ENCODE measurements at regions of chr13 and their contacts with region 1.

Region 1: GRCh38 chr13:23466144-23467002 is 32.9 kb upstream of the SACS start:
- DNase-seq: peak; percentile 38 to 69 (median 65)
- ATAC-seq: peak; percentile 94
- H3K4me3 ChIP-seq: peak overlapping the region; percentile 65
- H3K4me3 Mint-ChIP-seq: peak overlapping the region; percentile 79 to 89 (median 84)
- H3K27ac ChIP-seq: no peak overlapping the region
- H3K27ac Mint-ChIP-seq: peak overlapping the region in 4 of 9 donors; percentile 45 to 69 (median 61)
- H3K4me1 ChIP-seq: peaks cover 0 to 4% of the 10 kb centered on the region in 2 donors
- H3K4me1 Mint-ChIP-seq: peaks cover 0 to 8% (median 4%) of the 10 kb centered on the region in 7 donors
- H3K27me3 ChIP-seq: no peaks in the 10 kb centered on the region
- H3K27me3 Mint-ChIP-seq: peaks cover 0 to 46% (median 6%) of the 10 kb centered on the region in 5 donors

Region 2: DNA sequence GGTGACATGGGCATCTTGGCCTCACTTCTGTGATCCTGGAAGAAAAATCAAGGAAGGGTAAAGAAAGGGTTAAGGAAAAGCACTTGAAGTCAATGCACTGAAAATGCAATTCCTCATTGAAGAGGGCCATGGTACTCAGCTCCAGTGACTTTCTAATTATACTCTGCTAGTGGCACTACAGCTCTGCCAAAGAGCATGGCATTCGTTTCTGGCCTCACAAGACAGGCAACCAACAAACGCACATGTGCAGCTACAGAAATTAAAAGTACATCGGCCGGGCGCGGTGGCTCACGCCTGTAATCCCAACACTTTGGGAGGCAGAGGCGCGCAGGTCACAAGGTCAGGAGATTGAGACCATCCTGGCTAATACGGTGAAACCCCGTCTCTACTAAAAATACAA is 54.7 kb before region 1 on chr13:
- CTCF ChIA-PET with region 1: no interaction called
- POLR2A ChIA-PET with region 1: no interaction called
- intact Hi-C with region 1: loop called in 1 of 2 experiments (anchors 5 kb)
- DNase-seq: no peak
- ATAC-seq: no peak
- H3K4me3 ChIP-seq: no peak overlapping the region
- H3K4me3 Mint-ChIP-seq: no peak overlapping the region
- H3K27ac ChIP-seq: no peak overlapping the region
- H3K27ac Mint-ChIP-seq: no peak overlapping the region
- H3K4me1 ChIP-seq: no peaks in the 10 kb centered on the region
- H3K4me1 Mint-ChIP-seq: peaks cover 0 to 3% (median 0%) of the 10 kb centered on the region in 7 donors
- H3K27me3 ChIP-seq: no peaks in the 10 kb centered on the region
- H3K27me3 Mint-ChIP-seq: peaks cover 4 to 17% (median 6%) of the 10 kb centered on the region in 5 donors

Region 3: GRCh38 chr13:23696610-23697009 is 230.2 kb after region 1 on chr13:
- CTCF ChIA-PET with region 1: no interaction called
- POLR2A ChIA-PET with region 1: no interaction called
- intact Hi-C with region 1: no loop called
- DNase-seq: no peak
- ATAC-seq: no peak
- H3K4me3 ChIP-seq: peak overlapping the region; percentile 49
- H3K4me3 Mint-ChIP-seq: peak overlapping the region in 9 of 10 donors; percentile 77 to 86 (median 81)
- H3K27ac ChIP-seq: peak overlapping the region; percentile 62
- H3K27ac Mint-ChIP-seq: peak overlapping the region; percentile 87 to 98 (median 95)
- H3K4me1 ChIP-seq: peaks cover 0 to 9% of the 10 kb centered on the region in 2 donors
- H3K4me1 Mint-ChIP-seq: peaks cover 6 to 31% (median 24%) of the 10 kb centered on the region in 7 donors
- H3K27me3 ChIP-seq: no peaks in the 10 kb centered on the region
- H3K27me3 Mint-ChIP-seq: peaks cover 0 to 7% (median 0%) of the 10 kb centered on the region in 5 donors

Region 4: DNA sequence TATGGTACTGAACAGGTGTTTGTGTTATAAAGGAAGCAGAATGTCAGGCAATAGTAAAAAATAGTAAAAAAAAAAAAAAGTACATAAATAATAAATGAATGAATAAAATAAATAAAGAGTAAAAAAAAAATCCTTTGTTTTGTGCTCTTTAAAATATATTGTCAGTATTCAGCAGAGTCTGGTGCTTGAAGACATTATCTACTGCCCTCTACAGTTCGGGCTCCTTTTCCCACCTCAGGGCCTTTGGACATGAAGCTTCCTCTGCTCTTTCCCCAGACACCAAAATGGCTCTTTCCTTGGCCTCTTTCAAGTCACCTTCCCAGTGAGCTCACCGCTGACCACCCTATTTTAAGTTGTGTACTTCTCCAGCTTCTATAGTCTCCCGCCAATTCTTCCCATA is 241.3 kb after region 1 on chr13:
- CTCF ChIA-PET with region 1: no interaction called
- POLR2A ChIA-PET with region 1: no interaction called
- intact Hi-C with region 1: loop called (anchors 5 to 10 kb)
- DNase-seq: no peak
- ATAC-seq: no peak
- H3K4me3 ChIP-seq: no peak overlapping the region
- H3K4me3 Mint-ChIP-seq: no peak overlapping the region
- H3K27ac ChIP-seq: no peak overlapping the region
- H3K27ac Mint-ChIP-seq: peak overlapping the region in 1 of 9 donors; percentile 6
- H3K4me1 ChIP-seq: no peaks in the 10 kb centered on the region
- H3K4me1 Mint-ChIP-seq: peaks cover 0 to 2% (median 0%) of the 10 kb centered on the region in 7 donors
- H3K27me3 ChIP-seq: no peaks in the 10 kb centered on the region
- H3K27me3 Mint-ChIP-seq: peaks cover 0 to 3% (median 0%) of the 10 kb centered on the region in 5 donors

Region 5: DNA sequence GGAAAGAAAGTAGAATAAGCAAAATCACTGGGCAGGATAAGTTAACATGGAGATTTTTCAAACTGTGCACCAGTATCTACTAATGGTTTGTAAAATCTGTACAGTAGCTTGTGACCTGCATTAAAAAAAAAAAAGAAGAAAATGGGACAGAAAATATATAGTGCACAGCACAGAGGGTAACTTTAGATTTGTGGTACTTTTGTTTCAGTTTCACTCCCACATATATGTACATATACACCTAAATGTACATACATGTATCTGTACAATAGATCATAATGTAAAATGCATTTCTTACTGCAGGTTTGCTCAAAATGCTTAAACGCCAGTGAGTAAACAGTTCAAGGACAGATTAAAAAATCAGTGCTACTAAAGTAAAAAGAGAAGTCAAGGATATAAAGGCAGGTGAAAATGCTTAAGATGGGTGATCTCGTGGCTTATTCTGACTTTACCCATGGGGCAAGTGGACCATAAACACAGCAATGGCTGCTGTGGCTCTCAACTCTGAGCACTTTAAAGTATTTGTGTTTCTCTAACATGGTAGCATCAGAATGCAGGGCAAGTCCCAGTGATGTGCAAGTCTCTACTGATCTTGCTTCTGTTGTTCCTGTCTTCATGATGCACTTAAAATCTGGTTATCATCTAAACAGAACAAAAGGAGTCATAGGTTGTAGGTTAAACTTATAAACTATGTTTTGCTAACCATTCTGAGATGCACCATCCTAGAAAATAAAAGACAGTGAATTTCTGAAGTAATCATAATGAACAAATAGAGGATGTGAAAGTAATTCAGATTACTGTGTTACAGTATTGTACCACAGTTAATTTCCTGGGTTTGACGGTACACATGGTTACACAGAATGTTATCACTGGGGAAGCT is 310.6 kb after region 1 on chr13:
- CTCF ChIA-PET with region 1: no interaction called
- POLR2A ChIA-PET with region 1: no interaction called
- intact Hi-C with region 1: loop called in 1 of 2 experiments (anchors 2 kb)
- DNase-seq: no peak
- ATAC-seq: no peak
- H3K4me3 ChIP-seq: no peak overlapping the region
- H3K4me3 Mint-ChIP-seq: no peak overlapping the region
- H3K27ac ChIP-seq: no peak overlapping the region
- H3K27ac Mint-ChIP-seq: no peak overlapping the region
- H3K4me1 ChIP-seq: no peaks in the 10 kb centered on the region
- H3K4me1 Mint-ChIP-seq: peaks cover 0 to 28% (median 9%) of the 10 kb centered on the region in 7 donors
- H3K27me3 ChIP-seq: peaks cover 0 to 2% of the 10 kb centered on the region in 2 donors
- H3K27me3 Mint-ChIP-seq: no peaks in the 10 kb centered on the region

Region 6: GRCh38 chr13:23888658-23889614 is 422.6 kb after region 1 on chr13 and contains the start of gene MIPEP:
- CTCF ChIA-PET with region 1: interaction called, 8 read pairs
- POLR2A ChIA-PET with region 1: no interaction called
- intact Hi-C with region 1: loop called (anchors 1 to 2 kb)
- DNase-seq: peak; percentile 68 to 94 (median 83)
- ATAC-seq: peak; percentile 98
- H3K4me3 ChIP-seq: peak within 1 kb of the TSS; percentile 88
- H3K4me3 Mint-ChIP-seq: peak within 1 kb of the TSS; percentile 85 to 96 (median 92)
- H3K27ac ChIP-seq: peak within 1 kb of the TSS; percentile 70
- H3K27ac Mint-ChIP-seq: peak within 1 kb of the TSS; percentile 72 to 92 (median 84)
- H3K4me1 ChIP-seq: peaks cover 0 to 5% of the 10 kb centered on the region in 2 donors
- H3K4me1 Mint-ChIP-seq: peaks cover 12 to 31% (median 25%) of the 10 kb centered on the region in 7 donors
- H3K27me3 ChIP-seq: no peaks in the 10 kb centered on the region
- H3K27me3 Mint-ChIP-seq: no peaks in the 10 kb centered on the region
- total RNA-seq, gene MIPEP: 8.0 to 10.5 (median 9.2) TPM

Region 7: GRCh38 chr13:23966691-23967615 is 500.6 kb after region 1 on chr13:
- CTCF ChIA-PET with region 1: interaction called, 5 read pairs
- POLR2A ChIA-PET with region 1: no interaction called
- intact Hi-C with region 1: loop called in 1 of 2 experiments (anchors 2 kb)
- DNase-seq: peak in 6 of 9 donors; percentile 19 to 58 (median 48)
- ATAC-seq: peak; percentile 79
- H3K4me3 ChIP-seq: peak overlapping the region; percentile 57
- H3K4me3 Mint-ChIP-seq: peak overlapping the region; percentile 65 to 88 (median 84)
- H3K27ac ChIP-seq: peak overlapping the region; percentile 52
- H3K27ac Mint-ChIP-seq: peak overlapping the region; percentile 18 to 93 (median 88)
- H3K4me1 ChIP-seq: peaks cover 6% of the 10 kb centered on the region in 2 donors
- H3K4me1 Mint-ChIP-seq: peaks cover 6 to 39% (median 18%) of the 10 kb centered on the region in 7 donors
- H3K27me3 ChIP-seq: no peaks in the 10 kb centered on the region
- H3K27me3 Mint-ChIP-seq: no peaks in the 10 kb centered on the region

Region 8: GRCh38 chr13:24220086-24220703 is 753.8 kb after region 1 on chr13:
- CTCF ChIA-PET with region 1: no interaction called
- POLR2A ChIA-PET with region 1: no interaction called
- intact Hi-C with region 1: loop called (anchors 1 to 10 kb)
- DNase-seq: peak in 7 of 9 donors; percentile 59 to 77 (median 70)
- ATAC-seq: peak; percentile 88
- H3K4me3 ChIP-seq: no peak overlapping the region
- H3K4me3 Mint-ChIP-seq: no peak overlapping the region
- H3K27ac ChIP-seq: no peak overlapping the region
- H3K27ac Mint-ChIP-seq: peak overlapping the region in 2 of 9 donors; percentile 10 to 50
- H3K4me1 ChIP-seq: peaks cover 0 to 7% of the 10 kb centered on the region in 2 donors
- H3K4me1 Mint-ChIP-seq: peaks cover 7 to 44% (median 22%) of the 10 kb centered on the region in 7 donors
- H3K27me3 ChIP-seq: no peaks in the 10 kb centered on the region
- H3K27me3 Mint-ChIP-seq: no peaks in the 10 kb centered on the region